Spleen (tissue), 13 donors: ENCODE measurements at regions of chr17 and their contacts with region 1.

Region 1: GRCh38 chr17:41548844-41549595 is 20.9 kb upstream of the KRT19 start:
- DNase-seq: peak; percentile 95
- H3K4me3 ChIP-seq: peak overlapping the region in 5 of 8 donors; percentile 13 to 57 (median 21)
- H3K27ac ChIP-seq: peak overlapping the region in 5 of 8 donors; percentile 55 to 75 (median 65)
- H3K4me1 ChIP-seq: peaks cover 12 to 24% (median 22%) of the 10 kb centered on the region in 6 donors
- H3K27me3 ChIP-seq: peaks cover 0 to 20% (median 0%) of the 10 kb centered on the region in 7 donors
- CTCF ChIP-seq: peak; percentile 69 to 94 (median 86)
- POLR2A ChIP-seq: no peak

Region 2: GRCh38 chr17:41098476-41098875 is 450.5 kb before region 1 on chr17:
- intact Hi-C with region 1: no loop called
- DNase-seq: no peak
- H3K4me3 ChIP-seq: no peak overlapping the region
- H3K27ac ChIP-seq: no peak overlapping the region
- H3K4me1 ChIP-seq: peaks cover 0 to 9% (median 0%) of the 10 kb centered on the region in 6 donors
- H3K27me3 ChIP-seq: peaks cover 0 to 9% (median 0%) of the 10 kb centered on the region in 7 donors
- CTCF ChIP-seq: no peak
- POLR2A ChIP-seq: no peak

Region 3: GRCh38 chr17:41648411-41649195 is 99.6 kb after region 1 on chr17:
- intact Hi-C with region 1: loop called (anchors 5 kb)
- DNase-seq: peak; percentile 96
- H3K4me3 ChIP-seq: peak overlapping the region in 7 of 8 donors; percentile 25 to 68 (median 37)
- H3K27ac ChIP-seq: peak overlapping the region in 4 of 8 donors; percentile 46 to 67 (median 49)
- H3K4me1 ChIP-seq: peaks cover 10 to 37% (median 15%) of the 10 kb centered on the region in 6 donors
- H3K27me3 ChIP-seq: no peaks in the 10 kb centered on the region
- CTCF ChIP-seq: peak; percentile 80 to 94 (median 90)
- POLR2A ChIP-seq: no peak